ENCODE measurements at regions of chr1 and their contacts with region 1.

Region 1: DNA sequence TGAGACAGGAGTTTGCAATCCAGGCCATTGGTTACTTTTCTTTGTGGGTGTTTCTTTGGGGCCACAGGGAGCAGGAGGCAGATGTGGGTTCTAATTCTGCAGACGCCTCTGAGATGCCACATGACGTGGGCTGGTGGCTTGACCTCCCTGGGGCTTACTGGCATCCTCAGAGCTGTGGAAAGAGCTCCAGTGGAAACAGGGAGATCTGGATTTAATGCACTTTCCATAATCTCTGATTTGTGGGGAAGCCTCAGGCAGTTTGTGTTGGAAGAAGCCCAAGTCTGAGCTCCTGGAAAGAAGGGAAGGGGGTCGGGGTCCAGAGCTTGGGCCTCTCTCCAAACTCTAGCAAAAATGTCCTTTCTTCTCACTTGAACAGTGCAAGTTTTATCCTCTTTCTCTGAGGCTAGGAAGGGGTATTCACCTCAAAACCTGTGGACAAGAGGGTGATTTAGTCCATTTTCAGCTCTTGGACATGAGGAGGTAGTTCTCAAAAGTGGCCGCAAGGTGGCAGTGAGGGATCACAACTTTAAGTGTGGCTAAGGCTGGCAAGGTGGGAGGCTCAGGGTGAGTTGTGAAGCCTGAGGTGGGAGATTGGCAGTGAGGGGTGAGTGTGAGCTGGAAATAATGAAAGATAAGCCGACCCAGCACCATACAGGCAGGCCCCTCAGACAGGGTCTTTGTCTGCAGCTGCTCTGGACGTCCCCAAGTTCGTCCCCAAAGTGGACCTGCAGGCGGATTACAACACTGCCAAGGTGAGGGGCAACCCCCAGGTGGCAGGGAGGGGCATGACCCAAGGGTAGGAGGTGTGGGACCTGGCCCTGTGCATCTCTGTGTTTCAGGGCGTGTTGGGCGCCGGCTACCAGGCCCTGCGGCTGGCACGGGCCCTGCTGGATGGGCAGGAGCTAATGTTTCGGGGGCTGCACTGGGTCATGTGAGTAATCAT is 9.2 kb downstream of the IKBKE start:
- DNase-seq: peak in 9 of 10 donors; percentile 52 to 85 (median 73)
- H3K4me3 ChIP-seq: no peak overlapping the region
- H3K27ac ChIP-seq: no peak overlapping the region
- H3K27me3 ChIP-seq: no peaks in the 10 kb centered on the region
- CTCF ChIP-seq: peak; percentile 64 to 89 (median 78)

Region 2: DNA sequence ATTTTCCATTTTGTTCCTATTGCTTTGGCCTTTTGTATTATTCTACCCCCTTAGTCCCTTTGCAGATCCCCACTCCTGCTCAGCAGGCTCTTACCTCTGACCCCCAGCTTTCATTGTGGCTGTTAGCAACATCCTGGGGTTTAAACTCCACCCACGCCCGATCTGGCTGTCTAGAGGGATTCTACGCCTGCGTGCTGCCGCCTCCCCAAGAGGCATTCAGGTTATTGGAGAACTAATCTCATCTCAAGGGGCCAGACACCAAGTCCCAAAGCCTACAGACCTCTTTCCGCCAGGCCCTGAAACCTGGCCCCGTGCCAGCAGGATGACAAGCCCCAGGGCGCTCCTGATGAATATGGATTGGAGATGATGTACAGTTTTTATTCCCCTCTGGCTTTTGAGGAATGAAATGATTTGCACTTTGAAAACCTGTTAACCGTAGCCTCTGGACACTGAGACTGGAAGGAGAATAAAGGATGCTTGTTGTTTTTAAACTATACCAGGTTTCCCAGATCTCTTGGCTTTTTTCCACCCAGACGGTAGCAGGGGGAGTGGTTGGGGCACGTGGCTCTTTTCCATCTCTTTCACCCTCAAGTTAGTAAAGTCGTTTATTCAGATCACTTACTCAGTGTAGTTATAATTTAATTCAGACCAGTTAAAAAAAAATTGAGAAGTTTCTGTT is 23.6 kb before region 1 on chr1:
- intact Hi-C with region 1: no loop called
- DNase-seq: peak in 1 of 10 donors; percentile 56
- H3K4me3 ChIP-seq: no peak overlapping the region
- H3K27ac ChIP-seq: peak overlapping the region in 10 of 59 donors; percentile 2 to 47 (median 12)
- H3K27me3 ChIP-seq: no peaks in the 10 kb centered on the region
- CTCF ChIP-seq: no peak

Region 3: DNA sequence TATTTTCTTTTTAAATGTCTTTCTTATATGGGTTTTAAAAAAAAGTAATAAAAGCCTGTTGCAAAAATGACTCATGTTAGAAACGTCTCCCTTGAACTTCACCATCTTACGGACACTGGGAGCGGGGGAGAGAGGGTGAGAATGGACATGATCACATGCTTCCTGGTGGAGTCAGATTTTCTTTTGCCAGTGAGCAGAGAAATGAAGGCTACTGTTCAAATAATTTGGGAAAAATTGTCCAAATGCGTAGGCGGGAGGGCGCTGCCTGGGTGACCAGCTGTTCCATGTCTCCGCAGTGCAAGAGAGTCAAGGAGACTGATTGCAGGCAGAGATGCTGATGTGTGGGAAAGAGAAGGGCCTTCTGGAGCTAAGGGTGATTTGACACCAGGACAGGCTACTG is 109.8 kb after region 1 on chr1:
- intact Hi-C with region 1: loop called in 1 of 2 experiments (anchors 5 kb)
- DNase-seq: no peak
- H3K4me3 ChIP-seq: no peak overlapping the region
- H3K27ac ChIP-seq: no peak overlapping the region
- H3K27me3 ChIP-seq: no peaks in the 10 kb centered on the region
- CTCF ChIP-seq: no peak

Region 4: GRCh38 chr1:206663832-206664652 is 184.6 kb after region 1 on chr1:
- intact Hi-C with region 1: no loop called
- DNase-seq: peak in 6 of 10 donors; percentile 39 to 58 (median 52)
- H3K4me3 ChIP-seq: peak overlapping the region in 51 of 59 donors; percentile 3 to 56 (median 34)
- H3K27ac ChIP-seq: peak overlapping the region in 3 of 59 donors; percentile 17 to 50 (median 38)
- H3K27me3 ChIP-seq: peaks cover 0 to 12% (median 0%) of the 10 kb centered on the region in 45 donors
- CTCF ChIP-seq: peak; percentile 74 to 96 (median 86)

Region 5: DNA sequence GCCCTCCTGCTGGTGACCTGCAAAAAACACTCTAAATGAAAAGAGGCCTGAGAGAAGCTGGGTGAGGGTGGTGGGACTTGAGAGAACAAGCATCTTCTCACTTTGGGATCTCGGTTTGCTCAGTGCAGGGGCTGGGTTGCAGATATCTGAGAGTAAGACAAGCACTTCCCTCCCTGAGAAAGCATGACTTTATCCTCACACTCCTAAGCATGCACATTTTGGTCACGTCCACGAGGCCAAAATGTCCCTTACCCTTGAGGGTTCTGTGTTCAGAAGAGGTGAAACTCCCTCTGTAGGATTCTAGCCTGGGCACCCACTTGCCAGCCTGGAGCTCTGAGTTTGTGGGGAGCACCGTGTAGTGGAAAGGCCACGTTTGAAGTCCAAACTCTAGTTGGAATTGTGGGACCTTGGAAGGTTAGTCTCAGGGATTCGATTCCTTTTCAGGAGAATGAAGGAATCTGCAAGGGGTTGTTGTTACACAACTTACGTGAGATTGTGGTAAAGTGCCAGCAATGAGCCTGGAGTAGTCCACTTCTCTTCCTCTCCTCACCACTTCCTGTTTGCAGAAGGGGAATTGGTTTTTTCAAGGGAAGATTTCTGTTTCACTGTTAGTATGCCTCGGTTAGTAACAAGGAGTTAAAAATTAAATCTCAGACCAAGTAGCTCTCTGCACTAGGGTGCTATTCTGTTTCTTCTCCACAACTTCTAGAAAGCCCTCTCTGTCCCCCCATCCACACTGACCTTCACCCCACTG is 487.8 kb after region 1 on chr1:
- intact Hi-C with region 1: no loop called
- DNase-seq: no peak
- H3K4me3 ChIP-seq: no peak overlapping the region
- H3K27ac ChIP-seq: no peak overlapping the region
- H3K27me3 ChIP-seq: peaks cover 0 to 6% (median 0%) of the 10 kb centered on the region in 45 donors
- CTCF ChIP-seq: no peak

Region 6: DNA sequence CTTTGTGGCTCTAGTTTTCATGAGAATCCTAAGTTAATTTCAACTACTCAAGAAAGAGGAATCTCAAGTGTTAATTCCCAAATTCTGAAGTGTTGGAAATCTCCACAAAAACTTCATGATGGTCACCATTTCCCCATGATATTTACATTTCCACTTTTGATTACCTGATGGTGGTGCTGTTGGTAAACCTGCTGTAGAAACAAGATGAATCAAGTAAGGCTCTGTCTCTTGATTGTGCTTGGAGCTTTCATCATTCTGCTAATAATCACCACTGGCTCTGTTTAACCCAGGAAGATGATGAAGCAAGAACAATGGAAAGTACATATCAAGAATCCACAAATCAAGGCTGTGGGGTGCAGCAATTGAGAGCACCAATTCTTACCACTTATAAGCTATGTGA is 702.4 kb after region 1 on chr1:
- intact Hi-C with region 1: no loop called
- DNase-seq: no peak
- H3K4me3 ChIP-seq: no peak overlapping the region
- H3K27ac ChIP-seq: no peak overlapping the region
- H3K27me3 ChIP-seq: no peaks in the 10 kb centered on the region
- CTCF ChIP-seq: peak in 1 of 56 donors; percentile 11